ENCODE measurements at regions of chr17 and their contacts with region 1.

Region 1: DNA sequence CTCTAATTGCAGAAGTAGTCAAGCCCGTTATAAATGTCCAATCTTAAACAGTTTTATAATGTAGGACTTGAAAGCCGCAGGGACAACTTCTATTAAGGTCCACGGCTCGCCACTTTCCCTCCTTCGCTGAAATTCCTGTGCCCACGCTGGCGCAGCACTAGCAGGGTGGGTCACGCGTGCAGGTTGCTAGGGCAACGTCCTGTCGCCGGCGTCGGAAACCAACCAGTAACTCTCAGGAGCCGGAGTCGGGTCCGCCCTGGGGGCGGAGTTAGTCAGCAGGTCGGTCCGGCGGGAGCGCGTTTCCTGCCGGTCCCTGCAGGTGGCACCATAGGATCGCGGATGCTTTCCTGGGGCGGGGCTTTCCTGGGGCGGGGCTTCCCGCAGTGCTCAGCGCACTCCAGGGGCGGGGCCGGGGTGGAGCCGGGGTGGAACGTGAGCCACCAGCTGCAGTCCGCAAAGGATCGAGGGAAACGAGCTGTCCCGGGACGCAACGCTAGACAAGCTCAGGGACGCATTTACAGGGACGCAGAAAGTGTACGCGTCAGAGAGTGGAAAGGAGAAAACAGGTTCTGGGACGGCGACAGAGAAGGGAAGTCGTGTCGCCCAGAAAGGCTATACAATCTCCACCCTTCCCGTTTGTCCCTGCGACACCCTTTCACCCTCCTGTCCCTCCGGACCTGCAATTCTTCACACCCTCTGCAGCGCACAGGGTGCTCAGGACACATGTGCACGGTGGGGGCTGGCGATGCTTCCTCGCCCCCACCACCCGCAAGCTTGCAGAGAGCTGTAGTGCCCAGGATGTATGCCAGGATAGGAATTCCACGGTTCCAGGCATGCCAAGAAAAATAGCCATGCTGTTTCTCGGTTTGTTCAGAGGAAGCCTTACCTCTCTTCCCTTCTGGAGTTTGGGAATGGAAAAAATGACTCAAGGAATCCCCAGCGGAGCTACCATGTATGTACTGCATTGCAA is 12.4 kb downstream of the COPZ2 start:
- DNase-seq: peak; percentile 94
- H3K4me3 Mint-ChIP-seq: peak overlapping the region; percentile 86
- H3K27ac Mint-ChIP-seq: peak overlapping the region; percentile 75
- H3K4me1 Mint-ChIP-seq: peaks cover 27% of the 10 kb centered on the region
- H3K27me3 Mint-ChIP-seq: peaks cover 29% of the 10 kb centered on the region

Region 2: DNA sequence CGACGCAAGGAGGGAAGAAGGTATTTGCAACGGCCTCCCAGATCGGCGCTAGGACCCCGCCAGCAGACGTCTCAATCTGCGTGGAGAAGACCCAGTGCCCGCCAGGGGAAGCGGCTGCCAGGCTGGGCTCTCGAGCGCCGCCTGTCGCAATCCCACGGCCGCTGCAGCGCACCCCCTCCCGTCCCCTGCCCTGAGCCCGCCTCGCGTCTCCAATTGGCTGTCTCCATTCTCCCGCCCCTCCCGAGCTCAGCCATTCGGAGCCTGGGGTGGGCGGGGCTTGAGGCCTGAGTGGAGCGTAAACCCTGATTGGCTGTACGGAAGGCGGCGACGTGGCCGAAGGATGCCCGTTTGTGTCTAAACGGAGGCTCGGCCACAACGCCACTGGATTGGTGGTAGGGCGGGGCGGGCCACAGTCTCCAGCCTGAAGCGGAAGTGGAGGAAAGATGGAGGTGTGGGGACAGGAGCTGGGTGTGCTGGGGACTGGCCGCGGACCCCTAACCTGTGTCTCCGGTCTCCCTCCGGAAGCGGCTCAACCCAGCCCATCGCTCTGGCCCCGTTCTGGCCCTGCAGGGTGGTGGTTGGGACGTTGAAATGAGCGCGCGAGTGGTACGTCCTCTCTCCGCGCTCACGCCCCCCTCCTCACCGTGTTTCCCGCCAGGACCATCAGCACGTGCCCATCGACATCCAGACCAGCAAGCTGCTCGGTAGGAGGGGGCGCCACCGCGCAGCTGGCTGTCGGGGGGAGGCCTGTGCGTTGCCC is 54.3 kb before region 1 on chr17 and contains the start of gene CDK5RAP3:
- intact Hi-C with region 1: loop called (anchors 1 kb)
- DNase-seq: peak; percentile 100
- H3K4me3 Mint-ChIP-seq: peak within 1 kb of the TSS; percentile 89
- H3K27ac Mint-ChIP-seq: peak within 1 kb of the TSS; percentile 93
- H3K4me1 Mint-ChIP-seq: peaks cover 31% of the 10 kb centered on the region
- H3K27me3 Mint-ChIP-seq: peaks cover 2% of the 10 kb centered on the region
- total RNA-seq, gene CDK5RAP3: 190 and 200 TPM in 2 replicates

Region 3: DNA sequence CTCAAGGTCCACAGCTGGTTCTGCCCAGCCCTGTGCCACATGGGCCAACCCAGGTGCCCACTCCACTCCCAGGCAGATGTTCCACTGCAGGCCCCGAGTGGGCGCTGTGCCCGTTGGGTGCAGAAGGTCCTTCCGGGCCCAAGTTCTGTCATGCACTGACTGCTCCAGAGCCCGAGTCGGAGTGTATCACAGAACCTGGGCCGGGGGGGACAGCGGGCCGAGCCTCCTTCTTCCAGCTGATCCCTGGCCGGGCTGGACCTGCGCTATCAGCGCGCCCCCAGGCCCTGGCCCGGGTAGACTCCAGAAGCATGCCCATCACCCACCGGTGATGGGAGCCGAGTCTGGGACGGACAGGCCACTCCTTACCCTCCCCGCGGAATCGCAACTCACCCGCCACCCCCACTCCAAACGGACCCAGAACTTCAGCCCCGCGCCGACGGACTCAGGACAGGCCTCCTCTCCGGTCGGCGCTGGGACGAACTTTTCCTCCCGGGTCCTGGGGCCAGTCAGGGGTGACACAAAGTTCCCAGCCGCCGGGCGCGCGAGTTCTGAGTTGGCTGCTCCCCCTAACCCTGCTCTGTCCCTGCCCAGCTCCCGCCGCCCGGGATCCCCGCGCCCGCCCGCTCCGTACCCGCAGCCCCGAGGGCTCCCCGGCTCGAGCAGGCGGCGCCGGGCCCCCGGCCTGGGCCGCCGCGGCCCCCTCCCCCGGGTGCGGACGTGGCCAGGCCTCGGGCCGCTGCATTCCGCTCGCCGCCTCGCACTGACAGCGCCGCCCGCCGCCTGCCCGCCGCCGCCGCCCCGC is 12.0 kb after region 1 on chr17 and contains the start of gene COPZ2:
- intact Hi-C with region 1: loop called (anchors 1 kb)
- DNase-seq: peak; percentile 56
- H3K4me3 Mint-ChIP-seq: peak within 1 kb of the TSS; percentile 84
- H3K27ac Mint-ChIP-seq: peak within 1 kb of the TSS; percentile 78
- H3K4me1 Mint-ChIP-seq: peaks cover 14% of the 10 kb centered on the region
- H3K27me3 Mint-ChIP-seq: peaks cover 35% of the 10 kb centered on the region
- total RNA-seq, gene COPZ2: 3.4 and 5.8 TPM in 2 replicates

Region 4: GRCh38 chr17:48055442-48056237 is 30.4 kb after region 1 on chr17:
- intact Hi-C with region 1: no loop called
- DNase-seq: no peak
- H3K4me3 Mint-ChIP-seq: peak overlapping the region; percentile 63
- H3K27ac Mint-ChIP-seq: peak overlapping the region; percentile 92
- H3K4me1 Mint-ChIP-seq: peaks cover 66% of the 10 kb centered on the region
- H3K27me3 Mint-ChIP-seq: no peaks in the 10 kb centered on the region

Region 5: GRCh38 chr17:48101012-48101720 is 75.9 kb after region 1 on chr17 and contains the start of gene CBX1:
- intact Hi-C with region 1: loop called (anchors 1 kb)
- DNase-seq: peak; percentile 91
- H3K4me3 Mint-ChIP-seq: peak within 1 kb of the TSS; percentile 97
- H3K27ac Mint-ChIP-seq: peak within 1 kb of the TSS; percentile 91
- H3K4me1 Mint-ChIP-seq: peaks cover 42% of the 10 kb centered on the region
- H3K27me3 Mint-ChIP-seq: no peaks in the 10 kb centered on the region
- total RNA-seq, gene CBX1: 61.1 and 62.4 TPM in 2 replicates

Region 6: GRCh38 chr17:48335858-48336500 is 310.8 kb after region 1 on chr17:
- intact Hi-C with region 1: loop called (anchors 1 kb)
- DNase-seq: no peak
- H3K4me3 Mint-ChIP-seq: no peak overlapping the region
- H3K27ac Mint-ChIP-seq: no peak overlapping the region
- H3K4me1 Mint-ChIP-seq: peaks cover 16% of the 10 kb centered on the region
- H3K27me3 Mint-ChIP-seq: no peaks in the 10 kb centered on the region

Region 7: DNA sequence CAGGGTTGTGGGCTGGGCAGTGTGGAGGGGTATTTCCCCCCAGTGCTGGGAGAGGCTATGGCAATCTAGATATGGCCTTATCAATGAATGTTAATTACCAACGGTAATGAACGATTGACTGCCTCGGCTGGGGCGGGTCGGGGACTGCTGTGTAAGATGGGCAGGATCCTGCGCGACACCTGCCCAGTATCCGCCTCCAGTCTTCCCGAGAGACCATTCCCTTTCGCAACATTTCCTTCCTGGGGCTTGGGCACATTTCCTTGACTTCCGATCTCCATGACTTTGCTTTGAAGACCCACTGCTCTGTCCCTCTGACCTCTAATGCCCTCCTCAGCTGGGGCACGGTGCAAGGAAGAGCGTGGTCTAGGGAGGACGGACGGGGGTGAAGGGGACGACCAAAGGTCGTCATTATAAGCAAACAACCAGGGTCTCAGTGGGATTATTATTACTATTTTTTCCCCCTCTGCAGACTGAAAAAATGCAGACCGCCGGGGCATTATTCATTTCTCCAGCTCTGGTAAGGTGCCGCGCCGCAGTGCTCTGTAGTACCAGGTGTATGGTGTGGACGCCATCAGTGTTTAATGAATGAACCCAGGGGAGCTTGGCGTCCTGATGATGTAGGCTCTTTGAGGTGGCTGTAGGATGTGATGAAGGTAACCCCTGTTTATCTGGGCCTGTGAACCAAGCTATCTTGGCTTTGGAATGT is 867.9 kb after region 1 on chr17:
- intact Hi-C with region 1: loop called (anchors 2 kb)
- DNase-seq: no peak
- H3K4me3 Mint-ChIP-seq: peak overlapping the region; percentile 97
- H3K27ac Mint-ChIP-seq: peak overlapping the region; percentile 95
- H3K4me1 Mint-ChIP-seq: peaks cover 31% of the 10 kb centered on the region
- H3K27me3 Mint-ChIP-seq: no peaks in the 10 kb centered on the region

Measured in activated T-helper 1 cell treated with anti-CD3 and anti-CD28 coated beads, Interleukin-12 subunit alpha, Interleukin-12 subunit beta, Interleukin-2, Interleukin-4 antibody, amounts not matched to agents 30 ng/mL and 10 ng/mL and 1 ng/mL, durations not matched to agents 14 hours and 24 hours and 36 hours (primary cell).